Right ventricle myocardium superior (tissue), 1 donor: ENCODE measurements at regions of chr12 and their contacts with region 1.

Region 1: GRCh38 chr12:95117178-95117599 is 43.8 kb upstream of the NR2C1 start:
- DNase-seq: no peak
- ATAC-seq: peak; percentile 95

Region 2: DNA sequence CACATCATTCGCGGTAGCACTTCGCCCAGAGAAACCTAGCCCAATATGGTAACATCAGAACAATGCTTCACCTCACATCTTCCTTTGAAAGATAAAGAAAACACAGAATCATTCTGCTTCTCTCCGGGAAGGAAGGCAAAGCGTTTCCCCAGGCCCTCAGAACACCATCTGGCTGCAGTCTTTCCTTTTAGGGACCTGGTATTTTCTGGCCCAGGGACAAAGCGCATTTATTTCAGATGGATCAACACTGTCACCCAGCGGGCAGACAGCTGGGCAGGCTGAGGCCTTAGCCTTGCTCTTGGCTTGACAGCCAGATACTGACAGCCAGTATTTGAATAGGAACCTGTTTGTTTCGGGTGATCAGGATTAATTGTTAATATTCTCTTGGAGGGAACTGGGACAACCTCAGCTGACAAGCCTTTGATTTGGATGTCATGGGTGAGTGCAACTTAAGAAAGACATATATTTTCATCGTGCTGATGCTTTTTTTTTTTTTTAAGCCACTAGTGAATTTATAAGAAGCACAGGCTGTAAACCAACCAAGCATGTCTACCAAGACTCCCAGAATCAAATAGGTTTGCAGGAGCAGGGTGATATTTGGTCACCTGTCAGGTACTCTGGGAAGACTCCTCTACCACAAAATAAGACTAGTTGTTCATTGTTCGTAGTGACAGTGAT is 219.3 kb after region 1 on chr12:
- intact Hi-C with region 1: loop called (anchors 2 kb)
- DNase-seq: peak; percentile 72
- ATAC-seq: peak; percentile 94